Body of pancreas (tissue), 4 donors: ENCODE measurements at regions of chr12 and their contacts with region 1.

Region 1: GRCh38 chr12:27434673-27435565 is 11.6 kb upstream of the SMCO2 start:
- DNase-seq: peak in 3 of 4 donors; percentile 14 to 21 (median 17)
- ATAC-seq: peak; percentile 66
- H3K4me3 ChIP-seq: no peak overlapping the region
- H3K27ac ChIP-seq: no peak overlapping the region
- H3K4me1 ChIP-seq: no peaks in the 10 kb centered on the region
- H3K27me3 ChIP-seq: no peaks in the 10 kb centered on the region
- CTCF ChIP-seq: peak; percentile 22 to 61 (median 32)
- POLR2A ChIP-seq: no peak

Region 2: GRCh38 chr12:26971963-26972362 is 463.0 kb before region 1 on chr12:
- intact Hi-C with region 1: no loop called
- DNase-seq: no peak
- ATAC-seq: no peak
- H3K4me3 ChIP-seq: no peak overlapping the region
- H3K27ac ChIP-seq: no peak overlapping the region
- H3K4me1 ChIP-seq: no peaks in the 10 kb centered on the region
- H3K27me3 ChIP-seq: no peaks in the 10 kb centered on the region
- CTCF ChIP-seq: no peak
- POLR2A ChIP-seq: no peak

Region 3: GRCh38 chr12:27332407-27333301 is 102.3 kb before region 1 on chr12 and contains the start of gene BMAL2:
- intact Hi-C with region 1: no loop called
- DNase-seq: peak; percentile 36 to 64 (median 44)
- ATAC-seq: peak; percentile 56
- H3K4me3 ChIP-seq: peak within 1 kb of the TSS; percentile 38 to 72
- H3K27ac ChIP-seq: peak within 1 kb of the TSS in 3 of 4 donors; percentile 6 to 47 (median 12)
- H3K4me1 ChIP-seq: peaks cover 42% of the 10 kb centered on the region
- H3K27me3 ChIP-seq: peaks cover 0 to 3% of the 10 kb centered on the region in 2 donors
- CTCF ChIP-seq: no peak
- POLR2A ChIP-seq: no peak
- total RNA-seq, gene BMAL2: 2.6 to 4.3 TPM

Region 4: DNA sequence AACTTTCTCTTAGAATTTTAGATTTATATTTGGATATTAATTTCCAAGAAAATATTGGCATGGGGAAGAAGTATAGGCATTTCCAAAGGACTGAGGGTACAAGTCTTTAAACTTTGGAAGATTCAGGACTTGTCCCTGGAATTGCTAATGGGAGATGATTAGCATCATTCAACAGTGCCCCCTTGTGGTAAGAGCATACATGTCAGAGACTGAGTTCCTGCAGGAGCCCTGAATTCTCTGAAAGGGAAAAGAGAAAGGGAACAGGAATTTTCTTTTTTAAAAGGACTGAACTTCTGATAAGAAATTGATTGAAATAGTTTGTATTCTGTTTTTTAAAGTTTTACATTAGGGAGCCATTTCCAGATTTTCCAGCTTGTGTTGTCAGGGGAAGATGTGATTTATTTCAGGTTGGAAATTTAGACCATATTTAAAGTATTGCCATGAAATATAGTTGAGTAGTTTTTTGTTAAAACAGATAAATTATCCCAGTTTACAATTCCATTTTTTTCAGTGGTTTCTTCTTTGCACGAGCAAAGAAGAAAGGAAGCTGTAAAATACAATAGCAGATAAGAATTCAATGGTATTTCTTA is 217.3 kb after region 1 on chr12:
- intact Hi-C with region 1: loop called (anchors 5 kb)
- DNase-seq: peak; percentile 55 to 75 (median 66)
- ATAC-seq: peak; percentile 76
- H3K4me3 ChIP-seq: no peak overlapping the region
- H3K27ac ChIP-seq: no peak overlapping the region
- H3K4me1 ChIP-seq: no peaks in the 10 kb centered on the region
- H3K27me3 ChIP-seq: no peaks in the 10 kb centered on the region
- CTCF ChIP-seq: peak; percentile 49 to 87 (median 79)
- POLR2A ChIP-seq: no peak